ENCODE measurements at regions of chr18 and their contacts with region 1.

Region 1: DNA sequence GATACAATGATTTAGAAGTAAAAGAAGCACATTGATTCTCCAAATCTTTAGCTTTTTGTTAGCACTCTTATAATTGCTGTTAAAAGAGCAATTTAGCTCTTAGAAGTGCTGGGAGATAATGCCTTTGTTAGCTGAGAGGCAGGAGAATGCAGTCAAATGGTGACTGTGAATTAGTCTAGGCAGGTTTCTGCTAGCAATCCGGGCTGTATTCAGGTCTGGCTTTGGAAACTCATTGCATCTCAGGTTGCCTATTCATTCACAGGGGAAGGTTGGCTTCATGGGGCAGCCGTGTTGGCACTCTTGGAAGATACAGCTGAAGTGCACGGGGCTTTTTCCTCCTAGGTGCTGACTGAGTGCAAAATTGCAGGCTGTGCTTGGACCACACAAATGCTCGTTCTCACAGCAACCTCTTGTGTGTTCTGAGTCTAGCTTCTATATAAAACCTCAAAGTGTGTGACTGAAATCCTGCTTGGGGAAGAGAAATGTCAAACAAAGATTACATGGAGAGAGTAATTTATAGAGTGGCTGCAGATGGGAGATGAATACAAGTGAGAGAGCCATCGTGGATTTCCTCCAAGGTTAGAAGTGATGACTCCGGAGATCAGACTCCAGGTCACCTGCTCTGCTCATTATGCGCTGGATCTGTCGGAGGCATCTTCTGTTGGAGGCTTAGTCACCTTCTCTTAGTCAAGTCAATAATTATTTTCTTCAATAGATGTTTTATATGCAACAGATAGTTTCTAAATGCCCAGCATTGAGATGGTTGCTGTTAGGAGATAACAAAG is 167.8 kb downstream of the PMAIP1 start:
- DNase-seq: no peak
- ATAC-seq: no peak
- H3K4me3 Mint-ChIP-seq: no peak overlapping the region
- H3K27ac Mint-ChIP-seq: no peak overlapping the region
- H3K4me1 Mint-ChIP-seq: no peaks in the 10 kb centered on the region
- H3K27me3 Mint-ChIP-seq: peaks cover 16% of the 10 kb centered on the region
- CTCF ChIP-seq: no peak

Region 2: DNA sequence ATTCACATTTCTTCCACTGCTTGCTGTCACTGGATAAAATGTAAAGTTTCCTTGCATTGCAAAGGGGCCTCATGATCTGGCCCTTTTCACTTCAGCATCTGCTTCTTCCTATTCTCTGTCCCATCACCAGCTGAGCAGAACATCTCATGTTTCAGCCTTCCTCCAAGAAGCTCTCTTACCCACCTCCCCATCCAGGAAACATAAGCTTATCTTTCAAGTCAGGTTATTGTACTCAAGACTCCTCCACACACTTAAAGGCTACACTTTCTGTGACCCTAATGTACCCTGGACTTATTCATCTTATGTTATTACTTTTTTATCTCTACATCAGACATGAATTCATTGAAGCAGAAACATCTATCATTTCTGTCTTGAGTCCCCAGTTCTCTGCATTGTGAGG is 62.7 kb after region 1 on chr18:
- CTCF ChIA-PET with region 1: no interaction called
- POLR2A ChIA-PET with region 1: interaction called, 11 read pairs
- intact Hi-C with region 1: no loop called
- DNase-seq: no peak
- ATAC-seq: no peak
- H3K4me3 Mint-ChIP-seq: no peak overlapping the region
- H3K27ac Mint-ChIP-seq: no peak overlapping the region
- H3K4me1 Mint-ChIP-seq: no peaks in the 10 kb centered on the region
- H3K27me3 Mint-ChIP-seq: no peaks in the 10 kb centered on the region
- CTCF ChIP-seq: no peak